SK-N-SH (cell line): ENCODE measurements at regions of chr11 and their contacts with region 1.

Region 1: GRCh38 chr11:66677599-66678375 is at the start of gene RBM4B:
- DNase-seq: peak; percentile 98
- H3K4me3 ChIP-seq: peak within 1 kb of the TSS; percentile 60 to 63
- H3K27ac ChIP-seq: peak within 1 kb of the TSS; percentile 92 to 97
- H3K4me1 ChIP-seq: peaks cover 18 to 21% of the 10 kb centered on the region in 2 experiments
- H3K27me3 ChIP-seq: no peaks in the 10 kb centered on the region
- CTCF ChIP-seq: no peak
- EP300 ChIP-seq: no peak
- RAD21 ChIP-seq: no peak
- polyA plus RNA-seq, gene RBM4B: 31.1 and 43.3 TPM in 2 replicates

Region 2: GRCh38 chr11:66408488-66409214 is 269.1 kb before region 1 on chr11:
- CTCF ChIA-PET with region 1: interaction called, 15 read pairs
- POLR2A ChIA-PET with region 1: no interaction called
- DNase-seq: peak; percentile 95
- H3K4me3 ChIP-seq: peak overlapping the region; percentile 47 to 68
- H3K27ac ChIP-seq: no peak overlapping the region
- H3K4me1 ChIP-seq: peaks cover 0 to 3% of the 10 kb centered on the region in 2 experiments; a peak in 1 of 4 replicates
- H3K27me3 ChIP-seq: peaks cover 45% of the 10 kb centered on the region
- CTCF ChIP-seq: peak; percentile 100
- EP300 ChIP-seq: no peak
- RAD21 ChIP-seq: peak; percentile 96

Region 3: DNA sequence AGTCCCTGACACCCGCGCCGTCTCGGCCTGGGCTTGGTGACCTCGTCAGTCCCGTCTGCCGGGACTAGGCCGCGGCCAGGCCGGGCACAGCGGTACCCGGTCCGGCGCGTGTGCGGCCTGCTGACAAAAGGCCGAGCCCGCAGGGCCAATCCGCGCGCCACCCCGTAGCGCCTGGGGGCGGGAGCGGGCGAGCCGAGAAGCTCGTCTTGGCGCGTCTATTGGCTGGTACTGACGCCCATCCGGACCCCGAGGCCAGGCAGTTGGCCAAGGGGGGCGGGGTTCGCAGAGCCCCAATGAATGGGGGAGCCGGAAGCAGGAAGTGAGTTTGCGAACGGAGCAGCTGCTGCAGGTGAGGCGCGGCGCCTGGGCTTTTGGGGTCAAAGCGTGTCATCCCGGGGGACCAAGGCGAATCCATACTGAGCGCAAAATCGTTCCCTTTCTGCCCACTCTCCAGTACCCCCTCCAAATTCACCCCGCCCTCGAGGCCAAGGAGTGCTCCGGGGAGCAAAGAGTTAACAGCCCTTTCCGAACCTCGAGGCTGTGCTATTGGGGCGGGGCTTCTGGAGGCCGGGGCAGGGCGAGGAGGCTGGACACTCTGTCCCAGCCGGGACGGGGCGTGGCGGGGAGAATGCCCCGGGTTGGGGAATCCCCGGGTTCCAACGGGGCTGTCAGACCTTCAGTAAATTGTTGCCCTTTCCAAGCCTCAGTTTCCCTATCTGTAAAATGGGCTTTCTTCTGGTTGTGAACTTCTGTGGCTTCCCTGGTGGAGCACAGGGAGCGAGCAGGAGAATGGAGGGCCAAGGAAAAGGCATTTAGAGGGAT is 197.5 kb before region 1 on chr11 and contains the start of gene DPP3:
- CTCF ChIA-PET with region 1: interaction called, 6 read pairs
- POLR2A ChIA-PET with region 1: interaction called, 12 read pairs
- DNase-seq: peak; percentile 99
- H3K4me3 ChIP-seq: peak within 1 kb of the TSS; percentile 64 to 82
- H3K27ac ChIP-seq: peak within 1 kb of the TSS; percentile 85 to 93
- H3K4me1 ChIP-seq: peaks cover 0 to 15% of the 10 kb centered on the region in 2 experiments; a peak in 2 of 4 replicates
- H3K27me3 ChIP-seq: no peaks in the 10 kb centered on the region
- CTCF ChIP-seq: no peak
- EP300 ChIP-seq: no peak
- RAD21 ChIP-seq: no peak
- polyA plus RNA-seq, gene DPP3: 62.1 and 70.6 TPM in 2 replicates

Region 4: DNA sequence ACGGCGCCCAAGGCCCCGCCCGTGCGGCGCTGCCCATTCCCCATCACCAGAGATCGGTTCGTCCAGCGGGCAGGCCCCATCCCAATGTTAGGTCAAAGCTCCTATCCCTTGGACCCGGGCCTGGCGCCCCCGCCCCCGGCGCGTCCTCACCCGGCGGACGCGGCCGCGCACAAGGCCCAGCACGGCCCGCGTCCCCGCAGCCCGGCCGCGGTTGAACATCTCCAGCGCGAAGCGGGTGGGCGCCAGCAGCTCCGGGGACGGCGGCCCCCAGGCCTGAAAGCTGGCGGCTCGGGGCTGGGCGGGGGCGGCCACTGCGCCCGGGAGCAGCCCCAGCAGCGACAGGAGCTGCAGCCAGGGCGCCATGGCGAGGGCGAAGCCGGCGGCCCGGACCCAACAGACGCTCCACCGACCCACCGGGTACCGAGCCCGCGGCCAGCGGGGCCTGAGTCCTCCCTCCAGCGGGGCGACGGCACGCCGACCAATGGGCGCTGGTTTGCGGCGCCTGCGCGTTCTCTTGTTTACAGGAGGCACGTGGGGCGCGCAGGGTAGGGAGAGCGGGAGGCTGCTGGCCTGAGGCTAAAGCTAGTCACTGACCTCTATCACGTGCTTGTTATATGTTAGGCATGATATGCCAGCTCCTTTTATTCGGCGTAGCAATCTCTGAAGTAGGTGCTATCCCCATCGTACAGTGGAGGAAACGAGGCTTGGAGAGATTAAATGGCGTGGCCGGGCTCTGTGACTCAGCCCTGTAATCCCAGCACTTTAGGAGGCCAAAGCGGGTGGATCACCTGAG is 109.5 kb before region 1 on chr11 and contains the start of gene CTSF:
- CTCF ChIA-PET with region 1: interaction called, 30 read pairs
- POLR2A ChIA-PET with region 1: interaction called, 5 read pairs
- DNase-seq: peak; percentile 100
- H3K4me3 ChIP-seq: peak within 1 kb of the TSS; percentile 58 to 59
- H3K27ac ChIP-seq: peak within 1 kb of the TSS in 1 of 2 experiments; percentile 23; a peak in 1 of 4 replicates
- H3K4me1 ChIP-seq: peaks cover 0 to 7% of the 10 kb centered on the region in 2 experiments; a peak in 1 of 4 replicates
- H3K27me3 ChIP-seq: no peaks in the 10 kb centered on the region
- CTCF ChIP-seq: no peak
- EP300 ChIP-seq: no peak
- RAD21 ChIP-seq: no peak
- polyA plus RNA-seq, gene CTSF: 57.2 and 60.1 TPM in 2 replicates

Region 5: DNA sequence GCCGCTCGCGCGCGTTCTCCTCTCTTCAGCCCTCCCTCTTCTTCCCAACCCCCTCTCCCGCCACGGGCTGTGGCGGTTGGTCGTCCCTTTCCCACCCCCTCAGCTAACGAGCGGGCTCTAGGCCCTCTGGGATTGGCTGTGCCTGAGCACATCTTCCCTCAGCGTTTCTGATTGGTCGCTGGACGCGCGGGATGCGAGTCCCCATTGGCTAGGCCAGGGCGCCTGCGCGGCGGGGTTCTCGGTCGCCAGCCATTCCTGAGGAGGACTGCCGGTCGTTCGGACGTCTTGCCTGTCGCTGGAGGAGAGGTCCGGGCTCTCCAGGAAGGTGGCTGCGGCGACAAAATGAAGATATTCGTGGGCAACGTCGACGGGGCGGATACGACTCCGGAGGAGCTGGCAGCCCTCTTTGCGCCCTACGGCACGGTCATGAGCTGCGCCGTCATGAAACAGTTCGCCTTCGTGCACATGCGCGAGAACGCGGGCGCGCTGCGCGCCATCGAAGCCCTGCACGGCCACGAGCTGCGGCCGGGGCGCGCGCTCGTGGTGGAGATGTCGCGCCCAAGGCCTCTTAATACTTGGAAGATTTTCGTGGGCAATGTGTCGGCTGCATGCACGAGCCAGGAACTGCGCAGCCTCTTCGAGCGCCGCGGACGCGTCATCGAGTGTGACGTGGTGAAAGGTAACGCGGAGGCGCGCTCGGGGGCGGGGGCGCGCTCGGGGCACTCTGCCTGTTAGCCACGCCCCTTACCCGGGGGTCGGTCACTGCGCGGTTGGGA is 61.2 kb before region 1 on chr11 and contains the start of gene RBM14:
- CTCF ChIA-PET with region 1: interaction called, 8 read pairs
- POLR2A ChIA-PET with region 1: interaction called, 15 read pairs
- DNase-seq: peak; percentile 99
- H3K4me3 ChIP-seq: peak within 1 kb of the TSS; percentile 73 to 75
- H3K27ac ChIP-seq: peak within 1 kb of the TSS; percentile 87 to 91
- H3K4me1 ChIP-seq: peaks cover 8 to 11% of the 10 kb centered on the region in 2 experiments; a peak in 3 of 4 replicates
- H3K27me3 ChIP-seq: no peaks in the 10 kb centered on the region
- CTCF ChIP-seq: no peak
- EP300 ChIP-seq: no peak
- RAD21 ChIP-seq: no peak
- polyA plus RNA-seq, gene RBM14: 17.6 and 19.8 TPM in 2 replicates

Region 6: DNA sequence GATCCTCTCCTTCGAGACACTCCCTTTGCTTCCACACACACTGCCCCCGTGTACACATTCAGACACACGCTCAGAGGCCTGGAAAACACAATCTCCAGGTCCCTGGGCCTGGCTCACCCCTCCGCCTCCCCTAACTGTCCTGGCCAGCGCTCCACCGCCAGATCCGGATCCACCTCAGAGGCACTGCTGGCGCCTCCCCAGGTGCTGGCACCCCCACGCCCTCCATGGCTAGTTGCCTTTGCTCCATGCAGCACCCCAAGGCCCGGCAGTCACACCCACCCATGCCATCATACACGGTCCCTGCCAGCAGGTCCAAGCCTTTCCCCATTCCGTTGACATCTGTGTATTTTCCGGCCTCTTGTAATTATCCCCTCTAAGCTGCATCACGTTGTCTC is 40.1 kb after region 1 on chr11:
- CTCF ChIA-PET with region 1: no interaction called
- POLR2A ChIA-PET with region 1: no interaction called
- DNase-seq: no peak
- H3K4me3 ChIP-seq: no peak overlapping the region
- H3K27ac ChIP-seq: no peak overlapping the region
- H3K4me1 ChIP-seq: peaks cover 6 to 10% of the 10 kb centered on the region in 2 experiments; a peak in 3 of 4 replicates
- H3K27me3 ChIP-seq: no peaks in the 10 kb centered on the region
- CTCF ChIP-seq: no peak
- EP300 ChIP-seq: no peak
- RAD21 ChIP-seq: no peak

Region 7: GRCh38 chr11:66842896-66843775 is 165.3 kb after region 1 on chr11 and contains the start of gene RCE1:
- CTCF ChIA-PET with region 1: interaction called, 10 read pairs
- POLR2A ChIA-PET with region 1: no interaction called
- DNase-seq: peak; percentile 99
- H3K4me3 ChIP-seq: peak within 1 kb of the TSS; percentile 88 to 91
- H3K27ac ChIP-seq: peak within 1 kb of the TSS; percentile 85 to 90
- H3K4me1 ChIP-seq: peaks cover 13 to 24% of the 10 kb centered on the region in 2 experiments; a peak in 3 of 4 replicates
- H3K27me3 ChIP-seq: no peaks in the 10 kb centered on the region
- CTCF ChIP-seq: no peak
- EP300 ChIP-seq: no peak
- RAD21 ChIP-seq: no peak
- polyA plus RNA-seq, gene RCE1: 25.0 and 25.4 TPM in 2 replicates